SK-N-SH (cell line): ENCODE measurements at regions of chr10 and their contacts with region 1.

Region 1: DNA sequence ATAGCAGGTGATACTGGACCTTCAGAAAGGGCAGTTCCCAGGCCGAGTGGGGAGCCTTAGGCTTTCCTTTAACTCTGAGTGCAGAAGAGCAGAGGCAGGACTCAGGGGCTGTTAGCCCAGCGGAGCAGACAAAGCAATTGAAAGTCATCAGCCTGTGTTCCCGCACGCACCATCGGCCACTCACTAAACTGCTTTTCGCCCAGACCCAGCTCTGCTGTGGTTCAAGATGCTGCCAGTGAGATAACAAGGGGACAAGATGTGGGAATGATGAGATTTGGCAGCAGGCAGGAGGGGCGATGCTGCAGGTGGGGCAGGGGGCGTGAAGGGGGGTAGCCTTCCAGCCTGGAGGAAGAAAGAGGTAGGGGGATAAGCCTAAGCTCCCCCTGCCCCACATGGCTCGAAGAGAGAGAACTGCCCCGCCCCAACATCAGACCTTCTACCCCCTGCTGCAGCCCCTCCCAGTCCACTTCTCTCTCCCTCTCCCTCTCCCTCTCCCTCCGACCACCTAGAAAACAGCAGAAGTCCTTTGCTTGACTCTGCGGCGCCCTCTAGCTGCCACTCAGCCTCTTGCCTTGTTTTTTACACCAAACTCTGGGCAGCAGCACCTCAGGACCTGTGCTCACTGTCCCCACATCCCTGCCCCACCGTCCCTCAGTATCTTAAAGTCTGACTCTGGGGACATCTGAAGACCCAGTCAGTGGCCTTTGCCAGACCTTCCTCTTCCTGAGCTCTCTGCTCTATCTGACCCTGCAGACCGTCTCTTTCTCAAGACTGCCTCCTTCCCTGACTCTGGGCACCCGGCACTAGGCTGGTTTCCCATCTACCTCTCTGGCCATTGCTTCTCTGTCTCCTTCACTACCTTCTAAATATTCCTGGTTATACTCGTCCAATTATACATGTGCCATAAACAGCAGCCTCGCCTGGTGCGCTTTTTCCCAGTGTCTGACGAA is 110.5 kb downstream of the C10orf105 start:
- DNase-seq: peak; percentile 83
- H3K4me3 ChIP-seq: no peak overlapping the region; a peak in 1 of 4 replicates
- H3K27ac ChIP-seq: no peak overlapping the region
- H3K4me1 ChIP-seq: peaks cover 6 to 17% of the 10 kb centered on the region in 2 experiments; a peak in 3 of 4 replicates
- H3K27me3 ChIP-seq: 0 out of 2 replicates have a peak, but pooled peaks cover 4% of the 10 kb centered on the region
- CTCF ChIP-seq: peak; percentile 81
- EP300 ChIP-seq: no peak
- RAD21 ChIP-seq: peak; percentile 83

Region 2: GRCh38 chr10:71319042-71319799 is 289.9 kb before region 1 on chr10 and contains the start of gene SLC29A3:
- CTCF ChIA-PET with region 1: interaction called, 17 read pairs
- POLR2A ChIA-PET with region 1: no interaction called
- DNase-seq: peak; percentile 93
- H3K4me3 ChIP-seq: peak within 1 kb of the TSS; percentile 86 to 94
- H3K27ac ChIP-seq: peak within 1 kb of the TSS; percentile 34 to 87; a peak in 3 of 4 replicates
- H3K4me1 ChIP-seq: peaks cover 0 to 18% of the 10 kb centered on the region in 2 experiments; a peak in 1 of 4 replicates
- H3K27me3 ChIP-seq: no peaks in the 10 kb centered on the region
- CTCF ChIP-seq: peak; percentile 67
- EP300 ChIP-seq: no peak
- RAD21 ChIP-seq: peak; percentile 66
- polyA plus RNA-seq, gene SLC29A3: 3.8 and 4.6 TPM in 2 replicates

Region 3: DNA sequence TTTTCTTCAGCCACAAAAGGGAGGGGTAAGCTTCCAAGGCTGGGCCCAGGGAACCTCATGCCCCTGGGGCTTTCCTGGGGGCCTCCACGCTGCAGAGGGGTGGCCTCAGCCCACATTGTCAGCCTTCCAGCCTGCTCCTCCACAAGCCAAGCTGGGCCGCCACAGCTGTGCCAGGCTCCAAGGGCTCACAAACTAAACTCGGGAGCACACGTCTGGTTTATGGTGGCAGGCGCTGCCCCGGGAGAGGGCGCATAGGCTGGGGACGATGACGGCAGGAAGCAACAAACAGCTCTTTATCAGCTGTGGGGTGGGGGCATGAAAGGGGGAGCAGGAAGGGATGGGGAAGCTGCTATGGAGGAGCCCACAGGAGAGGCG is 218.6 kb before region 1 on chr10:
- CTCF ChIA-PET with region 1: interaction called, 70 read pairs
- POLR2A ChIA-PET with region 1: no interaction called
- DNase-seq: peak; percentile 41
- H3K4me3 ChIP-seq: no peak overlapping the region
- H3K27ac ChIP-seq: no peak overlapping the region
- H3K4me1 ChIP-seq: no peaks in the 10 kb centered on the region
- H3K27me3 ChIP-seq: peaks cover 43% of the 10 kb centered on the region
- CTCF ChIP-seq: no peak
- EP300 ChIP-seq: no peak
- RAD21 ChIP-seq: no peak

Region 4: DNA sequence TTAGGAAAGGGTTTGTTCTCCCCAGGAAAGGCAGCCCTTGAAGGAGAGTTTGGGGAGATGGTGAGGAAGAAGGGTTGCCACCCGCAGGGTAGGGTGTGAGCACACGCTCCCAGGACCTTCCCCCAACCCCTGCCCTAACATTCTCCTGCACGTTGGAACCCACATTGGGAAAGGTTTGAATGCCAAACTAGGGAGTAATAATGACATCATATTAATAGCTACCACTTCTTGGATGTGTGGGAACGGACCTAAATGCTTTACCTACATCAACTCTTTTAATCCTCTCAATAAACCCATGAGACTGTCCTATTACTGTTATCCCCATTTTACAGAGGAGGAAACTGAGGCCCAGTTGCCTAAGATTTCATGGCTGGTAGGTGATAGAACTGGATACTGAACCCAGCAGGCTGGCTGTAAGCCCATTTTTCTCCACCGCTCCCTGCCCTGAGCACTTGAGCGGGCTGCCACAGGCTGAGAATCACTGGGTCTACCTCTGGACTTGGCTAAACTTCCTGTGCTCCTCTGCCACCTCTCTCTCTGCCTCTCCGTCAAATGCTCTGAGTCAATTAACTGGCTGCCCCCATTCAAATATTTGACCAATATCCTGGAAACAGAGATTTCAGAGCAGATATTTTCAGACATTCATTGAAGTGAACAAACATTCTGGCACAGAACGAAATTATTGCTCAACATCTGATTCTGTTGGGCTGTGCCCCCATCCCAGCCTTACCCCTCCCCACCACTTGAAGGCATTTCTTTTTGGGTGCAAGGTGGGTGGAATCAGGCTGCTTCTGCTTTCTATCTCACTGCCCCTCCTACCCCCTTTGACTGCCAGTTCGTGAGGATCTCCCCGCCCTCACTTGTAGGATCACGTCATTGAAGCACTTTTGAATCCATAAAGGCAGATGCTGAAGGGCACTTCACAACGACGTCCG is 19.2 kb before region 1 on chr10:
- CTCF ChIA-PET with region 1: interaction called, 44 read pairs
- POLR2A ChIA-PET with region 1: no interaction called
- DNase-seq: no peak
- H3K4me3 ChIP-seq: no peak overlapping the region
- H3K27ac ChIP-seq: no peak overlapping the region
- H3K4me1 ChIP-seq: no peaks in the 10 kb centered on the region
- H3K27me3 ChIP-seq: peaks cover 11% of the 10 kb centered on the region
- CTCF ChIP-seq: no peak
- EP300 ChIP-seq: no peak
- RAD21 ChIP-seq: no peak

Region 5: GRCh38 chr10:71638822-71639719 is 30.0 kb after region 1 on chr10:
- CTCF ChIA-PET with region 1: interaction called, 11 read pairs
- POLR2A ChIA-PET with region 1: no interaction called
- DNase-seq: no peak
- H3K4me3 ChIP-seq: no peak overlapping the region
- H3K27ac ChIP-seq: no peak overlapping the region
- H3K4me1 ChIP-seq: peaks cover 0 to 6% of the 10 kb centered on the region in 2 experiments; a peak in 1 of 4 replicates
- H3K27me3 ChIP-seq: no peaks in the 10 kb centered on the region; the same call in 1 of the 2 replicates
- CTCF ChIP-seq: no peak
- EP300 ChIP-seq: no peak
- RAD21 ChIP-seq: no peak

Region 6: DNA sequence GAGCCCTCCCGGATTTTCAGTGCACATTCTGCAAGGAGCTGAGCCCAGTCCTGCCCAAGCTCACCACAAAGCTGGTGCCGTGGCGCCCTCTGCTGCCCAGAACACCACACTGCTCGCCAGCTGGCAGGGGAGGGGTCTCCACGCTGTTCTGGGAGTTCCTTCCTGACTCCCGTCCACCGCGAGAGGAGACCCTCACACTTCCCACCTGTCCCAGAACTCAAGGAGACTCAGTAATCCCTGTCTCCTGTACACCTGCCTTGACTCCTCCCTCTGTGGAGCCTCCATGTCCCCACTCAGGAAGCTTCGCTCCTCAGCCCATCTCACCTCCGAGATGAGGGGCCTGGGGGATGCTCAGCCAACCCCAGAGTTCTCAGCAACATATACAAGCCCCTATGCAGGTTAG is 99.2 kb after region 1 on chr10:
- CTCF ChIA-PET with region 1: interaction called, 46 read pairs
- POLR2A ChIA-PET with region 1: no interaction called
- DNase-seq: peak; percentile 90
- H3K4me3 ChIP-seq: peak overlapping the region in 1 of 2 experiments; percentile 51; a peak in 1 of 4 replicates
- H3K27ac ChIP-seq: no peak overlapping the region
- H3K4me1 ChIP-seq: peaks cover 0 to 13% of the 10 kb centered on the region in 2 experiments; a peak in 1 of 4 replicates
- H3K27me3 ChIP-seq: peaks cover 3% of the 10 kb centered on the region; the same call in 1 of the 2 replicates
- CTCF ChIP-seq: peak; percentile 77
- EP300 ChIP-seq: no peak
- RAD21 ChIP-seq: peak; percentile 90

Region 7: DNA sequence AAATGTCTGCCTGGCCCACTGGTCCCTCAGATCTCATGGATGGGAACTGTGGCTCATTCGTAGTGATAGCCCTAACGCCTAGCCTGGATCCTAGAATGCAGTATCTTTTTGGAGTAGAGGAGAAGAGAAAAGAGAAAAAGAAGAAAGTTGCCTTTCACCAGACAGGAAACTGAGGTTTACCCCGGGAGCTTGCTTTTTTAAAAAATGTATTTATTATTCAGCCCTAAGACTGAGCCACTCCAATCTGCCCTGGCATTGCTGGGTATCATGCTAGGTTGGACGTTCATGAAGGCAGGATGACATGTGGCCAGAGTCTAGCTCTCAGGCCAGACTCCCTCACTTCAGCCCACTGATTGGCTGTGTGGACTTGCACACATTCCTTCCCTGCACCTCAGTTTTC is 131.9 kb after region 1 on chr10:
- CTCF ChIA-PET with region 1: no interaction called
- POLR2A ChIA-PET with region 1: no interaction called
- DNase-seq: no peak
- H3K4me3 ChIP-seq: no peak overlapping the region
- H3K27ac ChIP-seq: no peak overlapping the region
- H3K4me1 ChIP-seq: peaks cover 0 to 34% of the 10 kb centered on the region in 2 experiments; a peak in 1 of 4 replicates
- H3K27me3 ChIP-seq: no peaks in the 10 kb centered on the region
- CTCF ChIP-seq: no peak
- EP300 ChIP-seq: no peak
- RAD21 ChIP-seq: no peak